GM12878 (cell line): ENCODE measurements at regions of chr6 and their contacts with region 1.

Region 1: GRCh38 chr6:130697995-130698535 is 129.1 kb upstream of the SMLR1 start:
- DNase-seq: peak; percentile 28
- ATAC-seq: peak; percentile 99
- H3K4me3 ChIP-seq: no peak overlapping the region
- H3K27ac ChIP-seq: no peak overlapping the region
- H3K4me1 ChIP-seq: no peaks in the 10 kb centered on the region
- H3K27me3 ChIP-seq: no peaks in the 10 kb centered on the region
- CTCF ChIP-seq: peak; percentile 71 to 81 (median 80)
- EP300 ChIP-seq: no peak
- POLR2A ChIP-seq: no peak
- RAD21 ChIP-seq: peak; percentile 95

Region 2: DNA sequence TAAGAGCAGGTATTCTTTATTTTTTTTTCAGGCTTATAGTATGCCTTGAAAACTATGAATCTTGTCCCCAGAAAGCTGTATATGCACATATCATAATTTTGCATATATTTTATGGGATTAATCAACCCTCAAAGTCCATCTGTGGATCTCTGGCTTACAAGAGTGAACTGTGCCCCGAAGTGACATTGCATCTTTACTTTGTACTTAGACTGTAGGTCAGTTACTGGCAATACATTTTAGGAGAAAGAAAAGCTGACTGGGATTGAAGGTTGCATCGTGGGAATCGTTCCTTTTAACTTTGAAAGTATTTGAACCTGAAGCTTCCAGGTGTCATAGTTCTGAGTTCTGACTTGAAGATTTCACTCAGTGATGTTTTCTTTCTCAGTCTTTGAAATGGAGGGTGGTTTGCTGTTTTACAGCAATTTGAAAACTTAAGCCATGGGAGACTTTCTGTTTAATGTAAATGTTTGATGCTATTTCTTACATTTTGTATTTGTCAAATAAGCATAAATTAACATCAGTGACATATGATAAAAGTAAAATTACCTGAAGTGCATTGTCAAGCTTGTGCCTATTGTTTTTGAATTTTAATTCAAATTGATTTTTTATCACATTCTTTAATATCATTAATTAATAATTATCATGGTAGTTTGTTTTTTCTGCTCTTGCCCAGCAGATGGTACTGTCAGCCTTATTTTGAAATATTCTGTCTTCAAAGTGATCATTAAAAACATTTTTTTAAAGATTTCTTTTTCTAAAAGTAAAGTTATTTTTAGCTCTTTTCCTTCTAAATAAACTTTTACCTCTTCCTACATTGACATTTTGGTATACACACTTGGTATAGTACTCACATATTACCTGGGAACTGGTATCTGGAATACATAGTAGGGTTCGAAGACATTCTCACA is 650.7 kb before region 1 on chr6:
- CTCF ChIA-PET with region 1: interaction called, 6 read pairs
- POLR2A ChIA-PET with region 1: no interaction called
- RAD21 ChIA-PET with region 1: no interaction called
- SMC1A ChIA-PET with region 1: interaction called, 5 read pairs
- in situ Hi-C with region 1: no loop called
- intact Hi-C with region 1: loop called (anchors 10 kb)
- DNase-seq: no peak
- ATAC-seq: no peak
- H3K4me3 ChIP-seq: no peak overlapping the region
- H3K27ac ChIP-seq: no peak overlapping the region
- H3K4me1 ChIP-seq: no peaks in the 10 kb centered on the region
- H3K27me3 ChIP-seq: no peaks in the 10 kb centered on the region
- CTCF ChIP-seq: peak in 1 of 3 experiments; percentile 9; a peak in 1 of 6 replicates
- EP300 ChIP-seq: no peak
- POLR2A ChIP-seq: no peak
- RAD21 ChIP-seq: peak; percentile 40

Region 3: GRCh38 chr6:130322673-130323268 is 375.3 kb before region 1 on chr6:
- CTCF ChIA-PET with region 1: interaction called, 200 read pairs
- POLR2A ChIA-PET with region 1: interaction called, 3 read pairs
- RAD21 ChIA-PET with region 1: interaction called, 69 read pairs
- SMC1A ChIA-PET with region 1: interaction called, 201 read pairs
- in situ Hi-C with region 1: loop called (anchors 5 kb)
- intact Hi-C with region 1: loop called (anchors 1 kb)
- DNase-seq: peak; percentile 17
- ATAC-seq: peak; percentile 79
- H3K4me3 ChIP-seq: no peak overlapping the region
- H3K27ac ChIP-seq: no peak overlapping the region
- H3K4me1 ChIP-seq: no peaks in the 10 kb centered on the region
- H3K27me3 ChIP-seq: no peaks in the 10 kb centered on the region
- CTCF ChIP-seq: peak; percentile 78 to 93 (median 86); a peak in 5 of 6 replicates
- EP300 ChIP-seq: no peak
- POLR2A ChIP-seq: no peak
- RAD21 ChIP-seq: peak; percentile 95

Region 4: GRCh38 chr6:130381459-130382380 is 316.3 kb before region 1 on chr6:
- CTCF ChIA-PET with region 1: interaction called, 11 read pairs
- POLR2A ChIA-PET with region 1: no interaction called
- RAD21 ChIA-PET with region 1: interaction called, 12 read pairs
- SMC1A ChIA-PET with region 1: interaction called, 15 read pairs
- in situ Hi-C with region 1: no loop called
- intact Hi-C with region 1: no loop called
- DNase-seq: no peak
- ATAC-seq: peak; percentile 84
- H3K4me3 ChIP-seq: no peak overlapping the region
- H3K27ac ChIP-seq: no peak overlapping the region
- H3K4me1 ChIP-seq: no peaks in the 10 kb centered on the region
- H3K27me3 ChIP-seq: no peaks in the 10 kb centered on the region
- CTCF ChIP-seq: peak; percentile 12 to 32 (median 12); a peak in 3 of 6 replicates
- EP300 ChIP-seq: no peak
- POLR2A ChIP-seq: no peak
- RAD21 ChIP-seq: peak; percentile 30; the same call in 1 of the 2 replicates

Region 5: DNA sequence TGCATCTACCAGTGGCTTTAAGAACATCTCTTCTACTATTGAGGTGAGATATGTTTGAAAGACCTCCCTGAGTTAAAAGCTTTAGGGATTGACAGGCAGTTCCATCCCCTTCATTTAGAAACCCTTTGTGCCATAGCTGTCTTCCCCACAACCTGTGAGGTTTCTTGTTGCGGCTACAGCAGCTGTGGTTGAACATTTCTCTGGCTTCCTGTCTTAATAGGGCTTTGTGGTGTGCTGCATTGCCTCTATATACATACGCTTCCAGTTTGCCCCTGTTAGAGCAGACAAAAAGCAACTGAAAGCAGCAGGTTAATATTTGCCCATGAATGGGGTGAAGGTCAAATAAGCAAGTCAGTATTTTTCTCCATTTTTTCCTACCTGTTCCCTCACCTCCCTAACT is 122.1 kb before region 1 on chr6:
- CTCF ChIA-PET with region 1: interaction called, 7 read pairs
- POLR2A ChIA-PET with region 1: no interaction called
- RAD21 ChIA-PET with region 1: interaction called, 4 read pairs
- SMC1A ChIA-PET with region 1: interaction called, 18 read pairs
- in situ Hi-C with region 1: no loop called
- intact Hi-C with region 1: no loop called
- DNase-seq: peak; percentile 87
- ATAC-seq: peak; percentile 99
- H3K4me3 ChIP-seq: no peak overlapping the region
- H3K27ac ChIP-seq: no peak overlapping the region
- H3K4me1 ChIP-seq: peaks cover 4% of the 10 kb centered on the region
- H3K27me3 ChIP-seq: no peaks in the 10 kb centered on the region
- CTCF ChIP-seq: no peak
- EP300 ChIP-seq: peak in 1 of 2 experiments; percentile 78; a peak in 2 of 4 replicates
- POLR2A ChIP-seq: no peak
- RAD21 ChIP-seq: 0 out of 2 replicates have a peak, but pooled peaks have one; percentile 4

Region 6: GRCh38 chr6:130676077-130676772 is 21.8 kb before region 1 on chr6:
- CTCF ChIA-PET with region 1: interaction called, 7 read pairs
- POLR2A ChIA-PET with region 1: no interaction called
- RAD21 ChIA-PET with region 1: interaction called, 12 read pairs
- SMC1A ChIA-PET with region 1: interaction called, 12 read pairs
- in situ Hi-C with region 1: no loop called
- intact Hi-C with region 1: no loop called
- DNase-seq: no peak
- ATAC-seq: no peak; the same call in 2 of the 3 replicates
- H3K4me3 ChIP-seq: no peak overlapping the region
- H3K27ac ChIP-seq: no peak overlapping the region
- H3K4me1 ChIP-seq: no peaks in the 10 kb centered on the region; the same call in 1 of the 2 replicates
- H3K27me3 ChIP-seq: no peaks in the 10 kb centered on the region
- CTCF ChIP-seq: peak in 1 of 3 experiments; percentile 31; a peak in 2 of 6 replicates
- EP300 ChIP-seq: no peak
- POLR2A ChIP-seq: no peak
- RAD21 ChIP-seq: peak; percentile 40; the same call in 1 of the 2 replicates

Region 7: GRCh38 chr6:130776287-130776925 is 78.3 kb after region 1 on chr6:
- CTCF ChIA-PET with region 1: interaction called, 11 read pairs
- POLR2A ChIA-PET with region 1: no interaction called
- RAD21 ChIA-PET with region 1: interaction called, 3 read pairs
- SMC1A ChIA-PET with region 1: interaction called, 6 read pairs
- in situ Hi-C with region 1: no loop called
- intact Hi-C with region 1: no loop called
- DNase-seq: peak; percentile 51
- ATAC-seq: peak; percentile 94
- H3K4me3 ChIP-seq: 0 out of 2 replicates have a peak overlapping the region, but pooled peaks have one; percentile 9
- H3K27ac ChIP-seq: no peak overlapping the region
- H3K4me1 ChIP-seq: peaks cover 10% of the 10 kb centered on the region
- H3K27me3 ChIP-seq: no peaks in the 10 kb centered on the region
- CTCF ChIP-seq: no peak
- EP300 ChIP-seq: no peak
- POLR2A ChIP-seq: no peak
- RAD21 ChIP-seq: no peak